ENCODE measurements at regions of chr3 and their contacts with region 1.

Region 1: DNA sequence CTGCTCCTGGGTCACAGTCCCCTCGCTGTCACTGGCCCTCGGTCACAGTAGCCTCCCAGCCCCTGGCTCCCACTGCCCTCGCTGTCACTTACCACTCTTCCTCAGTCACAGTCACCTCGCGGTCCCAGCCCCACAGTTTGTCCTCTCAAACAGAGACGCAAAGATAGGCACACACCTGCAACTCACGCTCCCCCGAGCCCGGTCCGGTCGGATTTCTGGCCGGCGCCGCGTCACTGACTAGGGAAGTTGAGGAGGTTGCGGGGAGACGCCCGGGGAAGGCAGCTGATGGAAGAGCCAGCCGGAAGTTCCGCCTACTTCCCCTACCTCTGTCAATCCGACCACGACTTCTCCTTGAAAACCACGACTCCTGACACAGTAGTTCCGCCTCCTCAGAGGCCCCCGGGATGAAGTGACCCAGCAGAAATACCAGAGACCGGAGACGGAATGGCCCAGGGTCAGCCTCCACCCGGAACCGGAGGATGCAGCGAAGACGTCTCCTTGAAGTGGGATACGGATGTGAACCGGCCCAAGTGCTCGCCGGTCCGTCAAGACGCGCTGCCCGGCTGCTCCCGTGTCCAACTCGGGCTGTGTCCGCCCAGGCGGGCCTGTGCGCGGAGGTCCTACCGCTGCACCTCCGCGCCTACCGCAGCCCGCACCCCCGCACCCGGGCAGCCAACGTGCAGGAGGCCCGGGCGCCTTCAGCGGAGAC is at the start of gene PCYT1A:
- DNase-seq: peak; percentile 93
- H3K4me3 Mint-ChIP-seq: peak within 1 kb of the TSS; percentile 99
- H3K27ac Mint-ChIP-seq: peak within 1 kb of the TSS; percentile 98
- H3K4me1 Mint-ChIP-seq: peaks cover 35% of the 10 kb centered on the region
- H3K27me3 Mint-ChIP-seq: no peaks in the 10 kb centered on the region
- total RNA-seq, gene PCYT1A: 54.2 and 56.0 TPM in 2 replicates

Region 2: GRCh38 chr3:196207833-196208607 is 79.6 kb before region 1 on chr3:
- intact Hi-C with region 1: no loop called
- DNase-seq: peak; percentile 85
- H3K4me3 Mint-ChIP-seq: peak overlapping the region; percentile 82
- H3K27ac Mint-ChIP-seq: peak overlapping the region; percentile 18
- H3K4me1 Mint-ChIP-seq: peaks cover 16% of the 10 kb centered on the region
- H3K27me3 Mint-ChIP-seq: peaks cover 28% of the 10 kb centered on the region

Region 3: GRCh38 chr3:196317687-196318467 is 30.3 kb after region 1 on chr3 and contains the start of gene DYNLT2B:
- intact Hi-C with region 1: loop called (anchors 1 kb)
- DNase-seq: peak; percentile 97
- H3K4me3 Mint-ChIP-seq: peak within 1 kb of the TSS; percentile 95
- H3K27ac Mint-ChIP-seq: peak within 1 kb of the TSS; percentile 98
- H3K4me1 Mint-ChIP-seq: peaks cover 11% of the 10 kb centered on the region
- H3K27me3 Mint-ChIP-seq: no peaks in the 10 kb centered on the region
- total RNA-seq, gene DYNLT2B: 11.8 and 12.8 TPM in 2 replicates

Measured in activated CD4-positive, alpha-beta T cell treated with anti-CD3 and anti-CD28 coated beads, Interleukin-2, amount 10 ng/mL, durations not matched to agents 24 days and 14 days (primary cell).